Ovary (tissue), 10 donors: ENCODE measurements at regions of chr16 and their contacts with region 1.

Region 1: GRCh38 chr16:87586201-87586782 is 16.0 kb upstream of the JPH3 start:
- DNase-seq: no peak
- H3K4me3 ChIP-seq: no peak overlapping the region
- H3K27ac ChIP-seq: no peak overlapping the region
- H3K4me1 ChIP-seq: peaks cover 20% of the 10 kb centered on the region
- H3K27me3 ChIP-seq: no peaks in the 10 kb centered on the region
- CTCF ChIP-seq: no peak
- EP300 ChIP-seq: no peak
- POLR2A ChIP-seq: no peak

Region 2: DNA sequence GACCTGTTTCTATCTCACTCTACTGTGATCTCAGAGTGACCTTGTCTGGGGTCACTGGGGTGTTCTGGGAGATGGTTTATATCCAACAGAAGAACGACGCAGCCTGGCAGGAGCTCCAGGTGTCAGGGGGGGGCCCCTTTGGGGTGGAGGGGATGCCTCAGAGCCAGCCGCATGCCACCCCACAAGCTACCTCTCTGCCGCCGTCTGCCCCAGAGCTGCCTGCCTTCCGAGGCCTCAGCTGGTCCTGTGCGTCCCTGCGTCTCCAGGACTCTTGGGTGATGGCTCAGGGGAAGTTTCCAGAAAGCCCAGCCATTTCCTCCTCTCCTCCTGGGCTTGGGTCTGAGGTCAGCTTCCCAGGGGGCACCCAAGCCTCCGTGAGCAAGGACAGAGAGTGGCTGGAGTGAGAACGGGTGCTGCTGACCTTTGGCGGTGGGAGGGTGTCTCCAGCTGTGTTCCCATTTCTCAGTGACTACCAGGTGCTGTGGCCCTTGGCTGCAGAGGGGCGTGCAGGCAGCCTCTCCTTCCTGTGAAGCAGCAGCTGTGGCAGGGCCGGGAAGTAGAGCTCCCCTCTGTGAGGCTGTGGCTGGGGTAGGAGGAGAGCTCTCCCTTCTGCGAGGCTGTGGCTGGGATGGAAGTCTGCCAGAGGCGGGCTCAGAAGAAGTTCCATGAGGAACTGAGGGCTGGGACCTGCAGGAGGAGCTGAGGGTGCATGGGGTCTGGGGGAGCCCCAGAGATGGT is 35.9 kb after region 1 on chr16:
- intact Hi-C with region 1: no loop called
- DNase-seq: no peak
- H3K4me3 ChIP-seq: no peak overlapping the region
- H3K27ac ChIP-seq: no peak overlapping the region
- H3K4me1 ChIP-seq: no peaks in the 10 kb centered on the region
- H3K27me3 ChIP-seq: no peaks in the 10 kb centered on the region
- CTCF ChIP-seq: no peak
- EP300 ChIP-seq: no peak
- POLR2A ChIP-seq: no peak

Region 3: DNA sequence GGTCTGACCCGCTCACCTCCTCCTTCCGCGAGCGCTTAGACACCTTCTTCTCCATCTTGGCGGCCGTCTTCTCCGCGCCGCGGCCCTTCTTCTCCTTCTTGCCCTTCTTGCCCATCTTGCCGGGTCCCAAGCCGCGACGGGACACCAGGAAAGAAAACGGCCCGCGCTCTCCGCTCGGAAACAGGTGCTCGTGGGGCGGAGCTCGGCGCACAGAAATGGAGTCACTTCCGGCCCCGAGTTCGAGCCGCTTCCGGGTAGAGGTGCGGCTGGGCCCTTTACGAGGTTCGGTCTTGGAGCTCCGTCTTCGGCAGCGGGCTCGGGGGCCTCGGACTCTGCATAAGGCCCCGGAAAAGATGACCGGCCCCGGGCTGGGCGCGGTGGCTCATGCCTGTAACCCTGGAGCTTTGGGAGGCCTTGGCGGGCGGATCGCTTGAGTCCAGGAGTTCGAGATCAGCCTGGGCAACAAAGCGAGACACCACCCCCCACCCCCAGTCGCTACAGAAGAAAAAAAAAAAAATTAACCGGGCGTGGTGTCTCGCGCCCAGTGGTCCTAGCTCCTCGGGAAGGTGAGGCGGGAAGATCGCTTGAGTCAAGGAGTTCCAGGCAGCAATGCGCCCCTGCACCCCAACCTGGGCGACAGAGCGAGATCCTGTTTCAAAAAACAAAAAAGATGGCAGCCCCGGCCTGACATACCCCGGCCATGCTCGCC is 179.6 kb after region 1 on chr16 and contains the start of gene KLHDC4:
- intact Hi-C with region 1: loop called (anchors 5 kb)
- DNase-seq: peak; percentile 83 to 93 (median 88)
- H3K4me3 ChIP-seq: peak within 1 kb of the TSS; percentile 90
- H3K27ac ChIP-seq: peak within 1 kb of the TSS; percentile 20 to 62
- H3K4me1 ChIP-seq: peaks cover 10% of the 10 kb centered on the region
- H3K27me3 ChIP-seq: no peaks in the 10 kb centered on the region
- CTCF ChIP-seq: peak in 1 of 3 donors; percentile 6
- EP300 ChIP-seq: no peak
- POLR2A ChIP-seq: peak; percentile 74
- total RNA-seq, gene KLHDC4: 24.1 to 35.9 (median 30.5) TPM